Activated T-helper 1 cell treated with anti-CD3 and anti-CD28 coated beads, Interleukin-12 subunit alpha, Interleukin-12 subunit beta, Interleukin-2, Interleukin-4 antibody, amounts not matched to agents 30 ng/mL and 10 ng/mL and 1 ng/mL, durations not matched to agents 14 hours and 24 hours and 36 hours (primary cell): ENCODE measurements at regions of chrX and their contacts with region 1.

Region 1: DNA sequence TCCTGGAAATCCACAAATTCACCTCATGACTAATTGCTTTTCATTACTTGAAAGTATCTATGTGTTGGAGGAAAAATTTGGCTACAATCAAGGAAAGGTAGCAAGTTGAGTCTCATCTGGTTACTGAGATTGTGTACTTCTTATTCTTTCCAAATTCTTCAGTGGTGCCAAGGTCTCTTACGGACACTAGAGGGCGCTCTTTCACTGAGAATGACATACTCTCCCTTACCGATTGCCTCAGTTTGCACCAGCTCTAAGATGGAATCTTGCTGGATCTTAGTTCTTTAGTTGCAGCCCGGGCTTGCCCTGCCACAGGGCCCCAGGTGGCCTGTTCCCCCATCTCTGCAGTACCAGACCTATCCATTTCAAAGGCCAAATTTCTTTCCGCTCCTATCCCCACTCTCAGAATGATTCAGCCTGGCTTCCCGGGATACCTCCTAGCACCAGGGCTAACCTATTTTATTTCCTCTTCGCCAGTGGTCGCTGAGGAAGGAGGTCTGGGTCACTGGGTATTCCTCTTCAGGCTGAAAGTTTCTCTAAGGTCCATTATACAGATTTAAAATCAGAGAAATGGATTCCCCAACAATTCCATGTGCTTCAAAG is 24.6 kb upstream of the GPR50 start:
- DNase-seq: peak; percentile 0
- H3K4me3 Mint-ChIP-seq: no peak overlapping the region
- H3K27ac Mint-ChIP-seq: no peak overlapping the region
- H3K4me1 Mint-ChIP-seq: no peaks in the 10 kb centered on the region
- H3K27me3 Mint-ChIP-seq: peaks cover 10% of the 10 kb centered on the region

Region 2: DNA sequence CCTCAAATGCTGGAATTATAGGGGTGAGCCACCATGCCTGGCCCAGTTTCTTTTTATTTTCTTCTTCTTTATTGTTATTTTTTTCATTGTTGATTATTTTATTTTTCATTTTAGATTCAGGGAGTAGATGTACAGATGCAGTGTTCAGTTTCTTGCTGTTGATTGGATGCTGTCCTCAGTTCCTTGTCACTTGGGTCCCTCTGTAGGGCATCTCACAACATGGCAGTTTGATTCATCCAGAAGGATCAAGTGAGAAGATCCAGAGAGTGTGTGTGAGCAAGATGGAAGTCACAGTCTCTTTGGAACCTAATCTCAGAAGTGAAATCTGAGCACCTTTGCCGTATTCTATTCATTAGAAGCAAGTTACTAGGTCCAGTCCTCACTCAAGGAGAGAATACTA is 147.7 kb before region 1 on chrX:
- intact Hi-C with region 1: no loop called
- DNase-seq: no peak
- H3K4me3 Mint-ChIP-seq: no peak overlapping the region
- H3K27ac Mint-ChIP-seq: no peak overlapping the region
- H3K4me1 Mint-ChIP-seq: no peaks in the 10 kb centered on the region
- H3K27me3 Mint-ChIP-seq: peaks cover 2% of the 10 kb centered on the region

Region 3: GRCh38 chrX:151099001-151099400 is 52.8 kb before region 1 on chrX:
- intact Hi-C with region 1: no loop called
- DNase-seq: no peak
- H3K4me3 Mint-ChIP-seq: no peak overlapping the region
- H3K27ac Mint-ChIP-seq: no peak overlapping the region
- H3K4me1 Mint-ChIP-seq: no peaks in the 10 kb centered on the region
- H3K27me3 Mint-ChIP-seq: peaks cover 5% of the 10 kb centered on the region

Region 4: DNA sequence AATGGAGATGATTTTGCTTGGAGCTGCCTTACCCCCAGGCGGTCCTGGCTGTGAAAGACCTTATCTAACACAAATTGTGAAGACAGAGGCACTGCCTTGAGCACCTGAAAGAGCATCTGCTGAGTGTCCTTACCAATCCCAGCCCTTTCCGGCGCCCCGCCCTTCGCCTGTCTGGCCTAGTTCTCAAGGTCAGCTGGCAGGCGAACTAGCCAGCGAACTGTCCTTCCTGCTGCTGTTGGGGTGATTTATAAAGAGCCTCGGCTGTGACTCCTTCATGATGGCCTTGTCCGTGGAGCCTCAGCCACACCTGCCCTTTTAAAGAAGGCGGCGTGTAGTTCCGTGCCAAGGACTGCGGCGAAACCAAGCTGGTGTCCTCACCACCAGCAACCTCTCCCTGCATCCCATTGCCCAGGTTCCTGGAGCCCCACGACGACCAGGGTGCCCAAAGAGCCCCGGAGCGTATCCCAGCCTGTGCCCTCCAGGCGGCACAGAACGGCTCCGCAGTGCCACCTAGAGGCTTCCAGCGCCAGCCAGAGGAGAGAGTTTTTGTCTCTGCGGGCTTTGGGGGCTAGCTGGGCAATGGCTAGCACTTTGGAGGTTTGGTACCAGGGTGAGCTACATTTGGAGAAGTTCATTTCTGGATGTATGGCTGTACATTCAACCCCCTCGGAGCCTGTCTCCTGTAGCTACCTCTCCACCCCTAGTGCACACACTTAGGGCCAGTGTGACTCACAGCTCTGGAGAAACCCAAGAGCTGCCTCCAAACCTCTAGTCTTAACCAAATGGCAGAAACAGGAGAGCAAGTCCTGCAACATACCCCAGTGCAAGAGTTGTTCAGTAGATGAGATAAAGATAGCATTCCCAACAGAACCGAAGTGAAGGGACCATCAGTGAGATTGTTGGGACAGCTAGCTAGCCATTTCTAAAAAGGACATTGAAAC is 208.4 kb after region 1 on chrX:
- intact Hi-C with region 1: loop called (anchors 1 kb)
- DNase-seq: no peak
- H3K4me3 Mint-ChIP-seq: no peak overlapping the region
- H3K27ac Mint-ChIP-seq: no peak overlapping the region
- H3K4me1 Mint-ChIP-seq: no peaks in the 10 kb centered on the region
- H3K27me3 Mint-ChIP-seq: peaks cover 14% of the 10 kb centered on the region

Region 5: GRCh38 chrX:151488677-151489076 is 336.9 kb after region 1 on chrX:
- intact Hi-C with region 1: loop called (anchors 5 kb)
- DNase-seq: no peak
- H3K4me3 Mint-ChIP-seq: no peak overlapping the region
- H3K27ac Mint-ChIP-seq: no peak overlapping the region
- H3K4me1 Mint-ChIP-seq: no peaks in the 10 kb centered on the region
- H3K27me3 Mint-ChIP-seq: no peaks in the 10 kb centered on the region

Region 6: GRCh38 chrX:152821145-152821765 is 1669.5 kb after region 1 on chrX:
- intact Hi-C with region 1: loop called (anchors 5 kb)
- DNase-seq: no peak
- H3K4me3 Mint-ChIP-seq: no peak overlapping the region
- H3K27ac Mint-ChIP-seq: no peak overlapping the region
- H3K4me1 Mint-ChIP-seq: no peaks in the 10 kb centered on the region
- H3K27me3 Mint-ChIP-seq: no peaks in the 10 kb centered on the region